SK-N-SH (cell line): ENCODE measurements at regions of chr11 and their contacts with region 1.

Region 1: GRCh38 chr11:33829433-33830141 is 55.3 kb upstream of the FBXO3 start:
- DNase-seq: peak; percentile 78
- H3K4me3 ChIP-seq: peak overlapping the region; percentile 49 to 62
- H3K27ac ChIP-seq: no peak overlapping the region
- H3K4me1 ChIP-seq: peaks cover 0 to 7% of the 10 kb centered on the region in 2 experiments; a peak in 1 of 4 replicates
- H3K27me3 ChIP-seq: peaks cover 19% of the 10 kb centered on the region; the same call in 1 of the 2 replicates
- CTCF ChIP-seq: peak; percentile 93
- EP300 ChIP-seq: no peak
- RAD21 ChIP-seq: peak; percentile 88

Region 2: GRCh38 chr11:33668468-33668825 is 161.1 kb before region 1 on chr11:
- CTCF ChIA-PET with region 1: no interaction called
- POLR2A ChIA-PET with region 1: no interaction called
- DNase-seq: no peak
- H3K4me3 ChIP-seq: no peak overlapping the region
- H3K27ac ChIP-seq: peak overlapping the region in 1 of 2 experiments; percentile 88; a peak in 2 of 4 replicates
- H3K4me1 ChIP-seq: peaks cover 0 to 37% of the 10 kb centered on the region in 2 experiments; a peak in 3 of 4 replicates
- H3K27me3 ChIP-seq: no peaks in the 10 kb centered on the region
- CTCF ChIP-seq: no peak
- EP300 ChIP-seq: no peak
- RAD21 ChIP-seq: no peak

Region 3: GRCh38 chr11:33687733-33688479 is 141.7 kb before region 1 on chr11:
- CTCF ChIA-PET with region 1: interaction called, 12 read pairs
- POLR2A ChIA-PET with region 1: no interaction called
- DNase-seq: peak; percentile 71
- H3K4me3 ChIP-seq: no peak overlapping the region; a peak in 1 of 4 replicates
- H3K27ac ChIP-seq: peak overlapping the region in 1 of 2 experiments; percentile 100; a peak in 2 of 4 replicates
- H3K4me1 ChIP-seq: peaks cover 12 to 45% of the 10 kb centered on the region in 2 experiments
- H3K27me3 ChIP-seq: no peaks in the 10 kb centered on the region
- CTCF ChIP-seq: peak; percentile 88
- EP300 ChIP-seq: no peak
- RAD21 ChIP-seq: peak; percentile 98

Region 4: DNA sequence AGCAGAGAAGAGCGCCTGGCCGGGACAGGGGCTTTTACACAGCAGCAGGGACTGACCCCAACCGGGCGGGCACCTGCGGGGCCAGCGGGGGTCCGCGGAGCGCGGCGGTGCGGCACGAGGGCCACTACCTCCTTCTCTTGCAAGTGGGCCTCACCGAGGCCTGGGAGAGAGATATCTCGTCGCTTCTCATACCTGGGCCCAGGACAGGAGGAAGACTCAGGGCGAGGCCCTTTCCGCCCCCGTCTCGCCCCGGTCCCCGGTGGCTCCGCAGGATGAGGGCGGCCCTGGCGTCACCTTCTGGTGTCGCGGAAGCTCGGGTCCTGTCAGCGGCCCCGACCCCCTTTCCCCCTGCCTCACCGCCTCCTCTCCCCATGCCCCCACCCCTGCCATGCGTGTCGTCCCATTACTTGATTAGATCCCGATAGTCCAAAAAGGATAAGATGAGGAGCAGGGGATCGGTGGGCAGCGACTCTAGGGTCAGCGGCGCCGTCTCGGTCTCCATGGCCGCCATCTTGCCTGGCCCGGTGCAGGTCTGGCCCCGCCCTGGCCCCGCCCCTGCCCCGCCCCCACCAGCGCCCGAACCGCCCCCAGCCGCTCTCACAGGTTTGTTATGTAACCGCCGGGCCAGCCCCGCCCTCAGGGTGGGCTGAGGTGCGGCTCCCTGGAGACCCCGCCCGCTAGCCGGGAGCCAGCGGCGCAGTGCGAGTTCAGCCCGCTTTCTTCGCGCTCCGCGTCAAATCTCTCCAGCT is 55.4 kb before region 1 on chr11 and contains the start of gene FBXO3:
- CTCF ChIA-PET with region 1: interaction called, 11 read pairs
- POLR2A ChIA-PET with region 1: no interaction called
- DNase-seq: peak; percentile 98
- H3K4me3 ChIP-seq: peak within 1 kb of the TSS; percentile 83 to 93
- H3K27ac ChIP-seq: peak within 1 kb of the TSS; percentile 59 to 74; a peak in 3 of 4 replicates
- H3K4me1 ChIP-seq: peaks cover 29 to 38% of the 10 kb centered on the region in 2 experiments; a peak in 3 of 4 replicates
- H3K27me3 ChIP-seq: no peaks in the 10 kb centered on the region
- CTCF ChIP-seq: no peak
- EP300 ChIP-seq: no peak
- RAD21 ChIP-seq: no peak
- polyA plus RNA-seq, gene FBXO3: 17.9 and 27.0 TPM in 2 replicates

Region 5: DNA sequence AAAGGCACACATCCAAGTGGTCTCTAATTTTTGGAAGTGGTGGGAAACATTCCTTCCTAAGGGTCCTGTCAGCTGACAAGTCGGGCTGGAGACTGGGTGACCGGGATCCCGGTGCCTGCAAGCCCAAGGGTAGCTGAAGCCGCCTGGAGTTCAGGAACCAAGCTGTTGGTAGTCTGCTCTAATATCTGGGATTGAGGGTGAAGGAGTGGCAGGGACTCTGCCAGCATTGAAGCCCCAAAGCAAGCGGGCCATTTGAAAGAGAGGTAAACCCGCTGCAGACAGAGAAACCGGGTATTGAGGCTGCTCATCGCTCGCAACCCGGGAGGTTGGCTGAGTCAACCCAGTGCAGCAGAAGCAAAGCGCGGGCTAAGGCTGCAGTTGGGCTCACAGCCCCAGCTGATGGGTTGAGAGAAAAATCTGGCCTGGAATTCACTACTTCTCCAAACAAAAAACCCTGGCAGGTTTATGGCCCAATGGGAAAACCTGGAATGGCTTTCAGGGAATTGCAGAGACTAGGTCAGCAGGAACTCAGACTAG is 27.1 kb before region 1 on chr11:
- CTCF ChIA-PET with region 1: interaction called, 213 read pairs
- POLR2A ChIA-PET with region 1: no interaction called
- DNase-seq: peak; percentile 72
- H3K4me3 ChIP-seq: peak overlapping the region; percentile 52 to 56
- H3K27ac ChIP-seq: no peak overlapping the region
- H3K4me1 ChIP-seq: peaks cover 5 to 9% of the 10 kb centered on the region in 2 experiments; a peak in 3 of 4 replicates
- H3K27me3 ChIP-seq: peaks cover 5% of the 10 kb centered on the region; the same call in 1 of the 2 replicates
- CTCF ChIP-seq: no peak
- EP300 ChIP-seq: peak in 1 of 2 experiments; percentile 55; a peak in 1 of 4 replicates
- RAD21 ChIP-seq: no peak; the same call in 1 of the 2 replicates

Region 6: DNA sequence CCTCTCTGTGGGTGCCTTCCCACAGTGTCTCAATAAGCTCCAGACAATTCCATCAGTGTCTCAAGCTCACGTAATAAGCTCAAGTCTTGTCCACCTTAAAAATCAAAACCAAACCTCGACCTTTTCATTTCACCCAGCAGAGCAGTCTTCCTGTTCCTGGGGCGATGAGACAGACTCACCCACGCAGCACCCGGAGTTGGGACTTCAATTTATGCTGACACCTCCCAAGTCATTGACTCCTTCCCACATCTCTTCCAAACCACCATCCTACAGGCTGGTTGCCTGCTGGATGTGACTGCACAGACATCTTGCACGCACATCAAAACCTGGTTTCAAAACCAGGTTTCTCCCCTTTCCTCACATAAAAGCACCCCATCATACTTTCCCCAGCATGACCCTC is 10.3 kb before region 1 on chr11:
- CTCF ChIA-PET with region 1: interaction called, 36 read pairs
- POLR2A ChIA-PET with region 1: no interaction called
- DNase-seq: no peak
- H3K4me3 ChIP-seq: no peak overlapping the region
- H3K27ac ChIP-seq: no peak overlapping the region
- H3K4me1 ChIP-seq: no peaks in the 10 kb centered on the region
- H3K27me3 ChIP-seq: peaks cover 18% of the 10 kb centered on the region
- CTCF ChIP-seq: no peak
- EP300 ChIP-seq: no peak
- RAD21 ChIP-seq: no peak

Region 7: DNA sequence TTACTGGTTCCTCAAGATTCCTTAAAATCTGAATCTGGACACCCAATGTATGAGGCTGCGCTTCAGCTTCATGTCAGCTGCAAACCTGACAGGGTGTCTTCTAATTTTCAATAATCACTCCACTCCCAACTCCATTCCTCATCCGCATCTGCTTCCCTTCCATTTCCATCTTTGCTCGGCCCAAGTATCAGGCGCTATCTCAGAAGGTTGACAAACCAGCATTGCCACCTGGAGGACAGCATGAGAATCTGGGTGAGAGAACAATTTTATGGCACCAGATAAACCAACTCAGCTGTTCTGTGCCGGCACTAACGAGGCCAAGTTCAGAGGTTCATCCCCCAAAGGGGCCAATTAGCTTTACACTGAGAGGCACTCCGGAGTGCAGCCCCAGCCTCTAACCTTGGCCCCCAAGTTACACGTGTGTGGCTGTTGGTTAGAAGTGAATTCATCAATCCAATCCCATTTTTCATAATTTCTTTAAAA is 141.4 kb after region 1 on chr11:
- CTCF ChIA-PET with region 1: interaction called, 40 read pairs
- POLR2A ChIA-PET with region 1: no interaction called
- DNase-seq: peak; percentile 66
- H3K4me3 ChIP-seq: no peak overlapping the region
- H3K27ac ChIP-seq: no peak overlapping the region
- H3K4me1 ChIP-seq: peaks cover 0 to 7% of the 10 kb centered on the region in 2 experiments; a peak in 1 of 4 replicates
- H3K27me3 ChIP-seq: peaks cover 14% of the 10 kb centered on the region; the same call in 1 of the 2 replicates
- CTCF ChIP-seq: peak; percentile 66
- EP300 ChIP-seq: no peak
- RAD21 ChIP-seq: peak; percentile 89

Region 8: DNA sequence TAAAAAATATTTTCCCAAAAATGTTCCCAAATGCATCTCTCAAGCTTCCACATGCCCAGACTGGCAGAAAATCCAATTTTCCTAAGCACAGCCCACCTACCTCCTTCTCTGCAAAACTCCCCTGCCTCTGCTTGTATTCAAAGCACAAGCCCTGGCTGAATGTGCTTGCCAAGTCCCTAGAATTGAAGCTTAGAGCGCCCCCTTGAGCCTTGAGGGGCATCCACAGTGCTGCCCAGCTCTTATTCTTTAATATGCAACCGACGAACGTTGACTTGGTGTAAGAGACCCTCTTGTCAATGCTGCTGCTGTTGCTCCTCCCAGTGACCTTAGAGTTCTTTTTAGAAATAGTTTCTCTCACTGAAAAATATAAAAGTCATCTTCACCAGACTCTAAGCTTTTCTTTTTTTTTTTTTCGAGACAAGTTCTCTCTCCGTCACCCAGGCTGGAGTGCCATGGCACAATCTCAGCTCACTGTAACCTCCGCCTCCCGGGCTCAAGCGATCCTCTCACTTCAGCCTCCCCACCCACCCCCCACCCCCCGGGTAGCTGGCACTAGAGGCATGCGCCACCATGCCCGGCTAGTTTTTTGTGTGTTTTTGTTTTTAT is 158.5 kb after region 1 on chr11:
- CTCF ChIA-PET with region 1: interaction called, 43 read pairs
- POLR2A ChIA-PET with region 1: no interaction called
- DNase-seq: peak; percentile 85
- H3K4me3 ChIP-seq: no peak overlapping the region
- H3K27ac ChIP-seq: no peak overlapping the region
- H3K4me1 ChIP-seq: peaks cover 0 to 10% of the 10 kb centered on the region in 2 experiments; a peak in 1 of 4 replicates
- H3K27me3 ChIP-seq: peaks cover 7% of the 10 kb centered on the region; the same call in 1 of the 2 replicates
- CTCF ChIP-seq: peak; percentile 93
- EP300 ChIP-seq: no peak
- RAD21 ChIP-seq: peak; percentile 86